CD8-positive, alpha-beta T cell (primary cell): ENCODE measurements at regions of chr4 and their contacts with region 1.

Region 1: GRCh38 chr4:77600521-77601451 is 4.8 kb upstream of the CXCL13 start:
- DNase-seq: peak in 2 of 9 experiments; percentile 42 to 55
- ATAC-seq: peak; percentile 46
- H3K4me3 ChIP-seq: no peak overlapping the region
- H3K4me3 Mint-ChIP-seq: no peak overlapping the region
- H3K27ac ChIP-seq: no peak overlapping the region
- H3K27ac Mint-ChIP-seq: no peak overlapping the region
- H3K4me1 ChIP-seq: no peaks in the 10 kb centered on the region
- H3K4me1 Mint-ChIP-seq: peaks cover 2% of the 10 kb centered on the region
- H3K27me3 ChIP-seq: no peaks in the 10 kb centered on the region
- H3K27me3 Mint-ChIP-seq: peaks cover 8% of the 10 kb centered on the region
- CTCF ChIP-seq: peak; percentile 81

Region 2: DNA sequence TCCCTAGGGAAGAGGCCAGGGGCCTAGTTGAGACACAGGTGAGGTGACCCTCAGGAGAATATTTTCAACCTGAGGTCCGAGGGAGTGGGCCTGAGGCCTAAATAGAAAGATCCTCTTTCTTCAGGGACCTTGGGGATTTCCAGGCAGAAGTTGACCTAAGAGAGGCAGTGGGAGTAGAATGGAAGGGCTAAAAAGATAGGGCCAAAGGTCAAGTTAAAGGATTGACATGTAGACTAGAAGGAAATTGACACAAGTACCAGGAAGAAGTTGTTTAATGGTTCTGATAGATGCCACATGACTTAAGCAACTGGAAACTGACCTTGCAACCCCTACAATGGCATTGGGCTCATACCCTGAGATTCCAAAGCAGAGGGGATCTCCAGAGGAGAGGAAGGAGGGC is 1088.8 kb before region 1 on chr4:
- CTCF ChIA-PET with region 1: no interaction called
- POLR2A ChIA-PET with region 1: no interaction called
- intact Hi-C with region 1: loop called in 1 of 2 experiments (anchors 5 kb)
- DNase-seq: no peak
- ATAC-seq: no peak
- H3K4me3 ChIP-seq: no peak overlapping the region
- H3K4me3 Mint-ChIP-seq: no peak overlapping the region
- H3K27ac ChIP-seq: no peak overlapping the region
- H3K27ac Mint-ChIP-seq: no peak overlapping the region
- H3K4me1 ChIP-seq: no peaks in the 10 kb centered on the region
- H3K4me1 Mint-ChIP-seq: no peaks in the 10 kb centered on the region
- H3K27me3 ChIP-seq: no peaks in the 10 kb centered on the region
- H3K27me3 Mint-ChIP-seq: no peaks in the 10 kb centered on the region
- CTCF ChIP-seq: no peak

Region 3: GRCh38 chr4:77240469-77241066 is 360.2 kb before region 1 on chr4:
- CTCF ChIA-PET with region 1: no interaction called
- POLR2A ChIA-PET with region 1: no interaction called
- intact Hi-C with region 1: loop called (anchors 5 kb)
- DNase-seq: peak; percentile 7 to 63 (median 43)
- ATAC-seq: no peak
- H3K4me3 ChIP-seq: no peak overlapping the region
- H3K4me3 Mint-ChIP-seq: no peak overlapping the region
- H3K27ac ChIP-seq: no peak overlapping the region
- H3K27ac Mint-ChIP-seq: no peak overlapping the region
- H3K4me1 ChIP-seq: no peaks in the 10 kb centered on the region
- H3K4me1 Mint-ChIP-seq: no peaks in the 10 kb centered on the region
- H3K27me3 ChIP-seq: no peaks in the 10 kb centered on the region
- H3K27me3 Mint-ChIP-seq: peaks cover 5% of the 10 kb centered on the region
- CTCF ChIP-seq: peak; percentile 21

Region 4: DNA sequence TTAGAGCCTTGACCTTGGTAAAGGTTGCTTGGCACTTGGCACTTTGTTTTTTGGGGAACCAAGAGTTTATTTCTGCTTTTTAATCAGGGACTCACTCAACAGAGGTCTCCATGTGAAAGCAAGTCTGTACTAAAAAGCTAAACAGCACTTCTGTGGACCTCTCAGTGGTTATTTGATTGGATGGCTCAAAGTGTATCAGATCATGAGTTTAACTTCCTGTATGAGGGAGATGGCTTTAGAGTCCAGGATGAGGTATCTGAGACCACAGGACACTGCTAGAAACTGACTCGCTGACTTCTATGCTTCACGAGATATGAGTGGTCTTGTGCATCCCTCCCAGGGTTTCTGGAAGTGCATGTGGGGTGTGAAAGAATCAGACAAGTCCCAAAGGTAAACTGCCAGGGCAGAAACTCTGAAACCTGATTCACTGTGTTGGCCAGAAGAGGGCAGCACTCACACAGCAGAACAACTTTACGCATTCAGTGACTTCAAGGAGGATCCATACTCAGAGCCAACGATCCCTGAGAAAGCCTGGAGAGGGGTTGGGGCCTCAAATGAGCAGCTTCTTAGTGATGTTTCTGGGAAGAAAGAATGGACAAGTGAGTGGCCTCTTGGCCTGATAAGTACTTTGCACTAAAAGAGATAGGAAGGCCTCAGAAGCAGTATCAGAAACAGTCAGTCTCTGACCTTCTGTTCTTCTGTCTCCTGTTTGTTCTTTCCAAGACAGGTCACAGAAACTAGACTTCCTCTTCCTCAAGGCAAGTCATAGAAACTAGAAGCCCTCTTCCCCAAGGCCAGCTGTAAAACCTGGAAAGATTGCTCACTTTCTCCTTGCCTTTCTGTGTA is 215.4 kb before region 1 on chr4:
- CTCF ChIA-PET with region 1: interaction called, 6 read pairs
- POLR2A ChIA-PET with region 1: no interaction called
- intact Hi-C with region 1: loop called (anchors 1 kb)
- DNase-seq: peak; percentile 7 to 68 (median 41)
- ATAC-seq: peak; percentile 29
- H3K4me3 ChIP-seq: no peak overlapping the region
- H3K4me3 Mint-ChIP-seq: no peak overlapping the region
- H3K27ac ChIP-seq: no peak overlapping the region
- H3K27ac Mint-ChIP-seq: no peak overlapping the region
- H3K4me1 ChIP-seq: no peaks in the 10 kb centered on the region
- H3K4me1 Mint-ChIP-seq: no peaks in the 10 kb centered on the region
- H3K27me3 ChIP-seq: no peaks in the 10 kb centered on the region
- H3K27me3 Mint-ChIP-seq: no peaks in the 10 kb centered on the region
- CTCF ChIP-seq: peak; percentile 64

Region 5: DNA sequence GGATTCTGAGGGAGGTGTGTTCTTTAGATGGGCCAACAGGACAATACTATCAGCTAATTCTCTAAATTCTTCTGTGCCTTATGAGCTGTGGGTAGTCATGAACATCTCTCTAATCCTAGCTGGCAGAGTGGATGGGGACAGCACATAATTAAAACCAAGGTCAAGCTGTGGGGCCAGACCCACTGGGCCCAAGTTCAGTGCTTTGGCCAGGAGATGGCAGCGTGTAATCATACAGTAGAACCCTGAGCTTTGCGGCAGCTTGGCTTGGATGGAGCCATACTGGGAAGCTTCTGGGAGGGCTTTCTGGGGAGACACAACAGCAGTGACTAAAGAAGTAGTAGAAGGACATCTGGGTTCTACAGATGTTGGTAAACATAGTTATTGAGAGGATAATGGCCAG is 135.5 kb before region 1 on chr4:
- CTCF ChIA-PET with region 1: interaction called, 5 read pairs
- POLR2A ChIA-PET with region 1: no interaction called
- intact Hi-C with region 1: loop called in 1 of 2 experiments (anchors 1 kb)
- DNase-seq: peak in 1 of 9 experiments; percentile 12
- ATAC-seq: no peak
- H3K4me3 ChIP-seq: no peak overlapping the region
- H3K4me3 Mint-ChIP-seq: no peak overlapping the region
- H3K27ac ChIP-seq: no peak overlapping the region
- H3K27ac Mint-ChIP-seq: no peak overlapping the region
- H3K4me1 ChIP-seq: no peaks in the 10 kb centered on the region
- H3K4me1 Mint-ChIP-seq: no peaks in the 10 kb centered on the region
- H3K27me3 ChIP-seq: no peaks in the 10 kb centered on the region
- H3K27me3 Mint-ChIP-seq: peaks cover 6% of the 10 kb centered on the region
- CTCF ChIP-seq: no peak